Psoas muscle (tissue), 8 donors: ENCODE measurements at regions of chr12 and their contacts with region 1.

Region 1: GRCh38 chr12:57836442-57837375 is 9.8 kb downstream of the CTDSP2 start:
- DNase-seq: peak; percentile 81 to 86
- ATAC-seq: peak; percentile 28 to 34 (median 32)
- H3K4me3 ChIP-seq: peak overlapping the region; percentile 96
- H3K27ac ChIP-seq: peak overlapping the region; percentile 100
- H3K4me1 ChIP-seq: peaks cover 100% of the 10 kb centered on the region
- H3K27me3 ChIP-seq: no peaks in the 10 kb centered on the region
- CTCF ChIP-seq: no peak

Region 2: GRCh38 chr12:57693659-57694458 is 142.8 kb before region 1 on chr12 and contains the start of gene OS9:
- intact Hi-C with region 1: no loop called
- DNase-seq: peak; percentile 91 to 95
- ATAC-seq: peak; percentile 98 to 99 (median 98)
- H3K4me3 ChIP-seq: peak within 1 kb of the TSS; percentile 89
- H3K27ac ChIP-seq: peak within 1 kb of the TSS; percentile 88
- H3K4me1 ChIP-seq: peaks cover 10% of the 10 kb centered on the region
- H3K27me3 ChIP-seq: peaks cover 0 to 6% (median 0%) of the 10 kb centered on the region in 3 donors
- CTCF ChIP-seq: peak; percentile 80
- total RNA-seq, gene OS9: 56.6 to 64.4 (median 61.5) TPM

Region 3: GRCh38 chr12:57893431-57894353 is 57.0 kb after region 1 on chr12:
- intact Hi-C with region 1: loop called (anchors 2 kb)
- DNase-seq: peak; percentile 92 to 96
- ATAC-seq: peak; percentile 54 to 79 (median 69)
- H3K4me3 ChIP-seq: peak overlapping the region; percentile 42
- H3K27ac ChIP-seq: peak overlapping the region; percentile 94
- H3K4me1 ChIP-seq: peaks cover 82% of the 10 kb centered on the region
- H3K27me3 ChIP-seq: no peaks in the 10 kb centered on the region
- CTCF ChIP-seq: peak; percentile 13

Region 4: GRCh38 chr12:57899010-57899662 is 62.4 kb after region 1 on chr12:
- intact Hi-C with region 1: loop called (anchors 2 kb)
- DNase-seq: peak; percentile 47 to 83
- ATAC-seq: peak; percentile 70 to 82 (median 80)
- H3K4me3 ChIP-seq: peak overlapping the region; percentile 23
- H3K27ac ChIP-seq: peak overlapping the region; percentile 94
- H3K4me1 ChIP-seq: peaks cover 46% of the 10 kb centered on the region
- H3K27me3 ChIP-seq: no peaks in the 10 kb centered on the region
- CTCF ChIP-seq: no peak

Region 5: DNA sequence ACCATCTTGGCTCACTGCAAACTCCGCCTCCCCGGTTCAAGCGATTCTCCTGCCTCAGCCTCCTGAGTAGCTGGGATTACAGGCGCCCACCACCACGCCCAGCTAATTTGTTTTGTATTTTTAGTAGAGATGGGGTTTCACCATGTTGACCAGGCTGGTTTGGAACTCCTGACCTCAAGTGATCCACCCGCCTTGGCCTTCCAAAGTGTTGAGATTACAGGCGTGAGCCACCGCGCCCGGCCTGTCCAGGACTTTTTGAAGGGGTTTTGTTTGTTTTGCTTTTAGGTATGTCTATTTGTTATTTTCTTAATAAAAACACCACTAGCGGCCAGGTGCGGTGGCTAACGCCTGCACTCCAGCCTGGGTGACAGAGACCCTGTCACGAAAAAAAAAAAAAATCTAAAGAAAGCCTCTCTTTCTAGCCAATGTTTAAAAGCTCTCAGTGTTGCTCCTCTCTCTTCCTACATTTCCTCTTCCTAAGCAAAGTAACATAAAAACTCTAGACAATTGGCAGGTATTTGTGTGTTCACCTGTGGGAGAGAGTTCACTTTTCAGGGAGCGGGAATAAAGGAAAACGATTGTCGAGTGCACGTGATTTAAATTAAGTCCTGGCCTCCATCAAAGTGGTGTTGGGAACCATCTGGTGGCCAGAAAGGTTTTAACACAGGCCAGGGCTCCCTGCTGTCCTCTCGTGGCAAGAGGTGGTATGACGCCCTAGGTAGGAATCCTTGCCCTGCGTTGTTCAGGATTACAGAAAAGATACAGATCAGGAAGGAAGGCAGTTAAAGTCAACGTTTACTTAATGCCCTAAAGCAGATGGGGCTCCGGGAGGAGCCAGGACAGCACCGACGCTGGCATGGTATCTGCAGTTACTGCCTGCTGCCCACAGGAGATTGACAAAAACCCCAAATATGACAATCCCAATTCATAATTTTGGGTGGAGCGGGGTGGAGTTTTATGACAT is 68.4 kb after region 1 on chr12:
- intact Hi-C with region 1: loop called in 1 of 2 experiments (anchors 1 kb)
- DNase-seq: peak; percentile 82 to 90
- ATAC-seq: peak; percentile 97 to 99 (median 98)
- H3K4me3 ChIP-seq: peak overlapping the region; percentile 46
- H3K27ac ChIP-seq: peak overlapping the region; percentile 54
- H3K4me1 ChIP-seq: no peaks in the 10 kb centered on the region
- H3K27me3 ChIP-seq: no peaks in the 10 kb centered on the region
- CTCF ChIP-seq: peak; percentile 100